ENCODE measurements at regions of chr11 and their contacts with region 1.

Region 1: DNA sequence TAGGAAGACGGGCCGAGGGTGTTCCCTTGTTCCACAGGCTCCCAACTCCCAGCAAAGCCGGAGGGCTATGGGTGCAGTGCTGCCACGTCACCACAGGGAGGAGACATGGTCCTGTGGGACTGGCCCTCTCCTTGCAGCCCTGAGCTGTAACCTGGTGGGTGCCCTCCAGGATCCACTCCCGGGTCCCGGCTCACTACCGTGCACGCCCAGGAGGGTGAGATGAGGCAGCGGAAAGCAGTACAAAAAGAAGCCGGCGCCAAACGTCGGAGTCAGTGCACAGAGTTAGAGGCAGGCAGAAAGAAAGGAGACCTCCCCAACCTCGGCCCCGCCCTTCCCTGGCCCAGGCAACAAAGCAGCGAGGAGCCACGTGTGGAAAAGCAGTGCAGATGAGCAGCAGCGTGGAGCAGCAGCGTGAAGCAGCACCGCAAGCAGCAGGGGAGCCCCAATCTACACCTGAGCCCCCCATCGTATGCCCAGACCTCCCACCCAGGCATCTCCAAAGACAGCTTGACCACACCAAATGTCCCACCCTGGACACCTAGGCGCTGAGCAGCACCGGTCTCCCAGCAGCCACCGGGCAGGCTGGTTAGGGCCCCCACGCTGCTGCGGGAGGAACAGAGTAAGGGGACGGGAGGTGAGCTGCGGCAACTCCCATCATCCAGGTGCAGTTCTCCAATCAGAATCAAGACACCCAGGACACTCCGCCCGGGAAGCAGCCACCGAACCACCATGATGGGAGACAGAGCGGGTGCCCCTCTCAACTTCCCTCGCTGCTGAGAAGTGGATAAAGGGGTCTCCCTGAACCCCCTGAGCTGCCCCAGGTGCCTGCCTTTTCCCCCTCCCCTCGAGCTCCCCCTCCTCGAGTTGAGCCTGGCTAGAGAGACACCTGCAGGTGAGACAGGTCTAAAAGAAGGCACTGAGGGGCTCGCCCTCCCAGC is 28.8 kb downstream of the IGSF9B start:
- ATAC-seq: peak; percentile 80 to 93 (median 86)
- H3K4me3 ChIP-seq: no peak overlapping the region
- H3K27ac ChIP-seq: peak overlapping the region in 1 of 2 donors; percentile 37
- H3K4me1 ChIP-seq: peaks cover 12 to 13% of the 10 kb centered on the region in 2 donors

Region 2: DNA sequence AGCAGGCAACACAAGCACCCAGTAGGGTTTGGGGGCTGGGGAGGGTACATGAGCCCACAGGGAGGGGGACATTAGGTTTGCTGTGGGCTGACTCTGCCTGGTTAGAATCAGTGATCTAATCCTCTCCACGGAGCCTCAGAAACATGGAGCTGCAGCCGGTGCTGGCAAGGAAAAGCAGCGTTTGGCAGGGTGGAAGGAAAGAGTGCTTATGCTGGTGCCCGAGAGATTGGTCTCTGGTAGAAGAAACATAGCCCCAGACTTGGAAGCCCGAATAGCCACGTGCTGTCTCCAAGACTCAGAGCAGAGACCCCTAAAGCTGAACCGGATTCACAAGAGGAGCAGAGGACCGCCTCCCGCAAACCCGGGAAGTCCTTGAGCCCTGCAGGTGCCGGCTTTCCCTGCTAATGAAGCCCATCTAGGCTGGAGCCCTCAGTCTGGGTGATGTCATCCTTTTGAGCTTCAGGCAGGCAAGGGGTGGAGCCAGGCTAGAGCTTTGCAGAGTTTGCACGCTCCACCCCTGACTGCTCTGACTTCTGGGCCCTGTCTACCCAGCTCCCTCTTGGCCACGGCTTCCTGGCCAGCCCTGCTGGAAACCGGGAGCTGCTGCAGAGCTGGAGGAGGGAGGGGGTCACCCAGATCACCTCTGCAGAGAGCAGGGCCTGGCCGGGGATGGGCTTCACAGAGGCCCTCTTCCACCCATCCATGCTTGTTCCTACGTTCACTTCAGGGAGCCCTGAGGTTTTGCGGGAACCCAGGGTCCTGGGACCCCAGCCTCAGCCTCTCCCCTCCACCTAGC is 105.9 kb after region 1 on chr11:
- in situ Hi-C with region 1: loop called in 5 of 9 experiments (anchors 25 kb)
- ATAC-seq: peak; percentile 61 to 91 (median 82)
- H3K4me3 ChIP-seq: peak overlapping the region in 2 of 5 donors; percentile 5 to 8
- H3K27ac ChIP-seq: peak overlapping the region; percentile 77 to 80
- H3K4me1 ChIP-seq: peaks cover 55 to 59% of the 10 kb centered on the region in 2 donors

Region 3: GRCh38 chr11:134139873-134140331 is 211.9 kb after region 1 on chr11:
- in situ Hi-C with region 1: loop called in 3 of 9 experiments (anchors 10 to 25 kb)
- ATAC-seq: peak; percentile 67 to 94 (median 84)
- H3K4me3 ChIP-seq: no peak overlapping the region
- H3K27ac ChIP-seq: no peak overlapping the region
- H3K4me1 ChIP-seq: peaks cover 0 to 5% of the 10 kb centered on the region in 2 donors

Region 4: GRCh38 chr11:134224710-134225662 is 297.0 kb after region 1 on chr11:
- in situ Hi-C with region 1: loop called in 1 of 9 experiments (anchors 25 kb)
- ATAC-seq: peak; percentile 5 to 62 (median 12)
- H3K4me3 ChIP-seq: peak overlapping the region; percentile 61 to 93 (median 62)
- H3K27ac ChIP-seq: peak overlapping the region; percentile 80 to 86
- H3K4me1 ChIP-seq: peaks cover 8 to 12% of the 10 kb centered on the region in 2 donors